Naive thymus-derived CD4-positive, alpha-beta T cell (primary cell): ENCODE measurements at regions of chr9 and their contacts with region 1.

Region 1: DNA sequence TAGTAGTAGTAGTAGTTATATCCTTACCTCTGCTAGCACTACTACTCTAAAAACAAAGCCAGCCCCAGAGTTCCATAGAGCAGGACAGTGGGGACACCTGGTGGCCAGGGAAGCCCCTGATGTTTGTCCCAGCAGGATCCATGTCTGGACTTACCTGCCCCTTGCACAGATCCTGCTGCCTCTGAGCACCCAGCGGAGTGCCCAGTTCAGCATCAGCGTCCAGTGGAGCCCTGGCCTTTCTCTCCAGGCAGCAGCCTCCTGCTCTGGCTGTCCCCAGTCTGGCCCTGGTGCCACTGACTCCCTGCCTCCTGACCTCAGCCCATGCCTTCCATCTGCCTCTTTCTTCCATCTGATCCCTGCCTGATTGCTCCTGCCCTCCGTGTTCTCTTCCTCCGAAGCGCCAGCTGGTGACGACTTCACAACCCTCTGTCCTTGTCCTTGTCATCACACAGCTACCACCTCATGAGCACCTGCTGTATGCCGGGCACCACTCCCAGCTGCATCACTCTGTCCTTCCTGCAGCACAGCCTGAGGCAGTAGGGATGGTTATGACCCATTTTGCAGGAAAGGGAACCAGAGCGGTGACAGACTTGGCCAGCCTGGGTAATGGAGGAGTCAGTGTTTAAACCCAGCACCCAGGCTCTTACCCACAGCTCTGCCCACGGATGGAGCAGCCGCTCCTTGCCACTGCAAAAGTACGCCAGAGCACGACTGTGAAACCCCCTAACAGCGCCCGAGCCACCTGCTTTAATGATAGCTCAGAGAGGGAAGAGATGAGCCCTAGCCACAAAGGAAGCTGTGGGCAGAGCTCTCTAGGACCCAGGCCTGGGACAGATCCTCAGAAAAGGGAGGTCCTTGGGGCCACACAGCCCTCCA is 11.5 kb downstream of the SARDH start:
- DNase-seq: peak in 8 of 9 donors; percentile 46 to 69 (median 64)
- ATAC-seq: peak; percentile 74
- H3K4me3 ChIP-seq: no peak overlapping the region
- H3K4me3 Mint-ChIP-seq: no peak overlapping the region
- H3K27ac ChIP-seq: no peak overlapping the region
- H3K27ac Mint-ChIP-seq: peak overlapping the region in 2 of 9 donors; percentile 10 to 76
- H3K4me1 ChIP-seq: no peaks in the 10 kb centered on the region
- H3K4me1 Mint-ChIP-seq: peaks cover 0 to 9% (median 7%) of the 10 kb centered on the region in 7 donors
- H3K27me3 ChIP-seq: no peaks in the 10 kb centered on the region
- H3K27me3 Mint-ChIP-seq: peaks cover 0 to 14% (median 0%) of the 10 kb centered on the region in 5 donors

Region 2: GRCh38 chr9:133532937-133533668 is 193.5 kb before region 1 on chr9:
- CTCF ChIA-PET with region 1: interaction called, 3 read pairs
- POLR2A ChIA-PET with region 1: no interaction called
- intact Hi-C with region 1: loop called in 1 of 2 experiments (anchors 1 kb)
- DNase-seq: peak; percentile 47 to 84 (median 77)
- ATAC-seq: peak; percentile 86
- H3K4me3 ChIP-seq: no peak overlapping the region
- H3K4me3 Mint-ChIP-seq: peak overlapping the region in 9 of 10 donors; percentile 57 to 82 (median 72)
- H3K27ac ChIP-seq: no peak overlapping the region
- H3K27ac Mint-ChIP-seq: peak overlapping the region in 8 of 9 donors; percentile 58 to 91 (median 80)
- H3K4me1 ChIP-seq: peaks cover 0 to 21% of the 10 kb centered on the region in 2 donors
- H3K4me1 Mint-ChIP-seq: peaks cover 6 to 24% (median 13%) of the 10 kb centered on the region in 7 donors
- H3K27me3 ChIP-seq: no peaks in the 10 kb centered on the region
- H3K27me3 Mint-ChIP-seq: peaks cover 0 to 18% (median 7%) of the 10 kb centered on the region in 5 donors

Region 3: DNA sequence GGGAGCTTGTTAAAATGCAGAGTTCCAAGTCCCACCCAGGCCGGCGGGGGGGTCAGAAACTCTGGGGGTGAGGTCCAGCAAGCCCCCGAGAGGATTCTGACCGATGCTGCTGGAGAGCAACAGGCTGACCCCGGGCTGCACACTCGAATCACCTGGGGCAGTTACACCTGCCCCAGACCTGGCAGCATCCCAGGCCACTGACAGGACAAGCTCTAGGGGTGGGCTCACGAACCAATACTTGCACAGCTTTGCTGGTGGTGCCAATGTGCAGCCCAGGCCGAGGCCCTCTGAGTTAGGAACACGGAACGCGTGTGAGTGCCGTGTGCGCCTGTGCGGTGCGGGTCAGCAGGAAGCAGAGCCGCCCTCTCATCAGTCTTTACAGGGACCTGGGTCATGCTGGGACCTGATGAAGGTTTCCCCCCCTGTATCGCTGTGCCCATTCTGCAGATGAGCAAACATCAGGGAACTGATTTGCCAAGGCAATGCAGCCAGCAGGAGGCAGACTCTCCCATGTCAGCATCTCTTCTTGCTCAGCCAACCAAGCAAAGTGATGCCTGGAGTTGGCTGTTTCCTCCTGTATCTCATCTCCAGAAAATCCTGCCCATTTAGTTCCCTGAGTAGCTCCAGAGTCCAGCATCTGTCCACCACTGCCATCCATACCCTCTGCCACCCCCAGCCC is 133.8 kb before region 1 on chr9:
- CTCF ChIA-PET with region 1: interaction called, 8 read pairs
- POLR2A ChIA-PET with region 1: no interaction called
- intact Hi-C with region 1: loop called in 1 of 2 experiments (anchors 2 kb)
- DNase-seq: no peak
- ATAC-seq: no peak
- H3K4me3 ChIP-seq: no peak overlapping the region
- H3K4me3 Mint-ChIP-seq: no peak overlapping the region
- H3K27ac ChIP-seq: no peak overlapping the region
- H3K27ac Mint-ChIP-seq: no peak overlapping the region
- H3K4me1 ChIP-seq: no peaks in the 10 kb centered on the region
- H3K4me1 Mint-ChIP-seq: peaks cover 0 to 2% (median 0%) of the 10 kb centered on the region in 7 donors
- H3K27me3 ChIP-seq: no peaks in the 10 kb centered on the region
- H3K27me3 Mint-ChIP-seq: peaks cover 0 to 4% (median 0%) of the 10 kb centered on the region in 5 donors

Region 4: DNA sequence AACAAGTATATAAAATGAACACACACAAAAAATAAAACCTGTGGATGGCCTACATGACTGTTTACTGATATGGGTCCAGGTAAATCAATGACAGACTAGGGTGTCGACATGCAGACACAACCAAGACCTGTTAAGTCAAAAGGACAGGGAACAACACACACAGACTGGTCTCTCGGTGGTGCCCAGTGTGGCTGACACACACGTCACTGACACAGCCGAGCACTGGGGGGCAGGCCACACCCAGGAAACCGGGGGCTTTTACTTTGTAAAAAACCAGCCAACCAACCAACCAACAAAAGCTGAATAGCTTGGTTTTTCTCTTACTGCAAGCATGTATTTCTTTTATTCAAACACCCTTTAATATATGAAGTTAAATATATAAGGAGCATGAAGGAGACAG is 122.4 kb before region 1 on chr9:
- CTCF ChIA-PET with region 1: interaction called, 4 read pairs
- POLR2A ChIA-PET with region 1: no interaction called
- intact Hi-C with region 1: loop called in 1 of 2 experiments (anchors 1 kb)
- DNase-seq: peak in 6 of 9 donors; percentile 10 to 33 (median 24)
- ATAC-seq: no peak
- H3K4me3 ChIP-seq: no peak overlapping the region
- H3K4me3 Mint-ChIP-seq: no peak overlapping the region
- H3K27ac ChIP-seq: no peak overlapping the region
- H3K27ac Mint-ChIP-seq: peak overlapping the region in 2 of 9 donors; percentile 20 to 38
- H3K4me1 ChIP-seq: no peaks in the 10 kb centered on the region
- H3K4me1 Mint-ChIP-seq: peaks cover 0 to 11% (median 8%) of the 10 kb centered on the region in 7 donors
- H3K27me3 ChIP-seq: peaks cover 0 to 7% of the 10 kb centered on the region in 2 donors
- H3K27me3 Mint-ChIP-seq: peaks cover 6 to 17% (median 14%) of the 10 kb centered on the region in 5 donors

Region 5: GRCh38 chr9:133700819-133701321 is 25.8 kb before region 1 on chr9:
- CTCF ChIA-PET with region 1: no interaction called
- POLR2A ChIA-PET with region 1: no interaction called
- intact Hi-C with region 1: no loop called
- DNase-seq: peak in 1 of 9 donors; percentile 23
- ATAC-seq: peak; percentile 10
- H3K4me3 ChIP-seq: peak overlapping the region; percentile 70
- H3K4me3 Mint-ChIP-seq: peak overlapping the region; percentile 34 to 93 (median 90)
- H3K27ac ChIP-seq: peak overlapping the region; percentile 91
- H3K27ac Mint-ChIP-seq: peak overlapping the region in 8 of 9 donors; percentile 98 to 100 (median 99)
- H3K4me1 ChIP-seq: peaks cover 31 to 66% of the 10 kb centered on the region in 2 donors
- H3K4me1 Mint-ChIP-seq: peaks cover 32 to 81% (median 63%) of the 10 kb centered on the region in 7 donors
- H3K27me3 ChIP-seq: no peaks in the 10 kb centered on the region
- H3K27me3 Mint-ChIP-seq: peaks cover 0 to 23% (median 0%) of the 10 kb centered on the region in 5 donors

Region 6: DNA sequence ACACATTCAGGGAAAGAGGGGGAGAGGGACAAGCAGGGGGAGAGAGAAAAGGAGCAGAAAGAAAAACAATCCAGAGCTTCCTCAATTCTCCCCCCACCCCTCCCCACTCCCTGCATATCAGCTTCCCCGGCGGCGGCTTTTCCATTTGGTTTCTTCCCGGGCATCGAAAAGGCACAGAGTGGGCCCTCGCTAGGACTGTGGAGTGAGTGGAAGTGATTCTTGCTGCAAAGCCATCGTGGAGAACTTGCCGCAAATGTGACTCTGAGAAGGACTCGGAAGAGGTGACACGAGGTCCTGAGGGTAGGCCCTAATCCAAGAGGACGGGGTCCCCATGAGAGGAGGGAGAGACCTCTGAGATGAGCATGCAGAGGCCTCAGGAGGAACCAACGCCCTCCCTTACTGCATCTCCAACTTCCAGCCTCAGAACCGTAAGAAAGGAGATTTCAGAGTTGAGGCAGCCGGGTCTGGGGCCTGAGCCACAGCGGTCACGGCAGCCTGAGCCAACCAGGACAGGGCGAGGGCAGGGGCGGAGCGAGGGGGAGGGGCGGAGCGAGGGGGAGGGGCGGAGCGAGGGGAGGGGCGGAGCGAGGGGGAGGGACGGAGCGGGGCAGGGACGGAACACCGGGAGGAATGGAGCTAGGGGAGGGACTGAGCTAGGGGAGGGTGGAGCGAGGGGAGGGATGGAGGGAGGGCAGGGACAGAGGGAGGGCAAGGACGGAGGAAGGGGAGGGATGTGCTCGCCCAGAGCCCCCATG is 32.7 kb after region 1 on chr9:
- CTCF ChIA-PET with region 1: no interaction called
- POLR2A ChIA-PET with region 1: no interaction called
- intact Hi-C with region 1: no loop called
- DNase-seq: no peak
- ATAC-seq: no peak
- H3K4me3 ChIP-seq: no peak overlapping the region
- H3K4me3 Mint-ChIP-seq: no peak overlapping the region
- H3K27ac ChIP-seq: no peak overlapping the region
- H3K27ac Mint-ChIP-seq: no peak overlapping the region
- H3K4me1 ChIP-seq: no peaks in the 10 kb centered on the region
- H3K4me1 Mint-ChIP-seq: peaks cover 0 to 2% (median 0%) of the 10 kb centered on the region in 7 donors
- H3K27me3 ChIP-seq: no peaks in the 10 kb centered on the region
- H3K27me3 Mint-ChIP-seq: peaks cover 0 to 9% (median 6%) of the 10 kb centered on the region in 5 donors